ENCODE measurements at regions of chr3 and their contacts with region 1.

Region 1: GRCh38 chr3:160413613-160414248 is 14.3 kb downstream of the SMC4 start:
- DNase-seq: peak; percentile 84
- ATAC-seq: peak; percentile 91
- H3K4me3 ChIP-seq: no peak overlapping the region
- H3K27ac ChIP-seq: no peak overlapping the region
- H3K4me1 ChIP-seq: peaks cover 3% of the 10 kb centered on the region
- H3K27me3 ChIP-seq: no peaks in the 10 kb centered on the region
- CTCF ChIP-seq: peak; percentile 89
- POLR2A ChIP-seq: no peak
- RAD21 ChIP-seq: peak; percentile 84

Region 2: GRCh38 chr3:159929435-159930141 is 484.1 kb before region 1 on chr3:
- CTCF ChIA-PET with region 1: interaction called, 3 read pairs
- POLR2A ChIA-PET with region 1: no interaction called
- dilution Hi-C with region 1: no loop called
- in situ Hi-C with region 1: no loop called
- intact Hi-C with region 1: loop called (anchors 5 kb)
- DNase-seq: peak; percentile 87
- ATAC-seq: peak; percentile 41
- H3K4me3 ChIP-seq: no peak overlapping the region
- H3K27ac ChIP-seq: peak overlapping the region; percentile 93
- H3K4me1 ChIP-seq: peaks cover 24% of the 10 kb centered on the region
- H3K27me3 ChIP-seq: no peaks in the 10 kb centered on the region
- CTCF ChIP-seq: peak; percentile 67
- POLR2A ChIP-seq: no peak
- RAD21 ChIP-seq: peak; percentile 72

Region 3: GRCh38 chr3:160038862-160039562 is 374.7 kb before region 1 on chr3:
- CTCF ChIA-PET with region 1: interaction called, 4 read pairs
- POLR2A ChIA-PET with region 1: no interaction called
- dilution Hi-C with region 1: no loop called
- in situ Hi-C with region 1: loop called (anchors 10 kb)
- intact Hi-C with region 1: no loop called
- DNase-seq: no peak
- ATAC-seq: peak; percentile 49
- H3K4me3 ChIP-seq: peak overlapping the region; percentile 36
- H3K27ac ChIP-seq: no peak overlapping the region
- H3K4me1 ChIP-seq: peaks cover 4% of the 10 kb centered on the region; the same call in 1 of the 2 replicates
- H3K27me3 ChIP-seq: peaks cover 21% of the 10 kb centered on the region
- CTCF ChIP-seq: no peak
- POLR2A ChIP-seq: no peak
- RAD21 ChIP-seq: no peak

Region 4: GRCh38 chr3:160265073-160265472 is 148.7 kb before region 1 on chr3:
- CTCF ChIA-PET with region 1: no interaction called
- POLR2A ChIA-PET with region 1: no interaction called
- dilution Hi-C with region 1: no loop called
- in situ Hi-C with region 1: no loop called
- intact Hi-C with region 1: no loop called
- DNase-seq: no peak
- ATAC-seq: no peak
- H3K4me3 ChIP-seq: no peak overlapping the region
- H3K27ac ChIP-seq: no peak overlapping the region
- H3K4me1 ChIP-seq: no peaks in the 10 kb centered on the region
- H3K27me3 ChIP-seq: no peaks in the 10 kb centered on the region
- CTCF ChIP-seq: no peak
- POLR2A ChIP-seq: no peak
- RAD21 ChIP-seq: no peak

Region 5: DNA sequence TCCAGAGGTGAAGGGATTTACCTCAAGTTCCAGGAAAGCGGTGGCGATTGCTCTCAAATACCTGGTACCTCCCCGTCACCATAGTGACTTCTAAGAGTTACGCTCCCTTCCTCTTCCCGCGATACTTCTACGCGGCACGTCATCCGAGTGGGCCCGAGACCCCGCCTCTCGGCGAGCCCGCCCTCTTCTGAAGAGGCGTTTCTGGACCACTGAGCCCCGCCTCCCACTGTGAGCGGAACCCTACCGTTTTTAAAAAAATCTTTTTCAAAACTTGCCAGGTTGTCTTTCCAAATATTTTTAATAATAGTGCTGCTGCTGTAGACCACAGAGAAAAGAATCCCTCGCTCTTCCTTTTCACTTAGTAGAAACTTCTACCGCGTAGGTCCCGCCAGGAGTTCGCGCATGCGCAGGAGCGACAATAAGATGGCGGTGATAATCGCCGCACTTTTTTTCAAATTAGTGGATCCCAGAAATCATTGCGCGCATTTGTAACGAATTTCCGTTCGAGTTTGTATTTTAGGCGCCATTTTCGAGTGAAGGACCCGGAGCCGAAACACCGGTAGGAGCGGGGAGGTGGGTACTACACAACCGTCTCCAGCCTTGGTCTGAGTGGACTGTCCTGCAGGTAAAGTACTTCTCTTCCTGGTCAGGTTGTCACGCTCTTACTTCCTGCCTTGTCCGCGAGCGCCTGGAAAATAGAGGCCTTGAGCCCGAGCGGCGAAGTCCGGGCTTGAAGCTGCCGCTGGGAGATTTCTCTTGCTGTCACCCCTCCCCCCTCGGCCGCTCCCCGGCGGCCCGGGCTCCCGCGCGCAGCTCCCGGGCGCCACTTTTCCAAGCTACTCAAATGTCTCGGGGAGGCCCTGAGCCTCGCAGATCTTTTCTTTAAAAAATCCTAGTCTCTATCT is 14.4 kb before region 1 on chr3 and contains the starts of genes IFT80 and SMC4:
- CTCF ChIA-PET with region 1: no interaction called
- POLR2A ChIA-PET with region 1: interaction called, 4 read pairs
- dilution Hi-C with region 1: no loop called
- in situ Hi-C with region 1: no loop called
- intact Hi-C with region 1: loop called (anchors 1 kb)
- DNase-seq: peak; percentile 95
- ATAC-seq: peak; percentile 94
- H3K4me3 ChIP-seq: peak within 1 kb of the TSS; percentile 60
- H3K27ac ChIP-seq: peak within 1 kb of the TSS; percentile 88
- H3K4me1 ChIP-seq: peaks cover 3% of the 10 kb centered on the region; the same call in 1 of the 2 replicates
- H3K27me3 ChIP-seq: no peaks in the 10 kb centered on the region
- CTCF ChIP-seq: no peak
- POLR2A ChIP-seq: peak; percentile 90; the same call in 1 of the 2 replicates
- RAD21 ChIP-seq: no peak
- total RNA-seq, gene IFT80: 16.8 and 36.9 TPM in 2 replicates
- total RNA-seq, gene SMC4: 48.8 and 77.8 TPM in 2 replicates

Region 6: DNA sequence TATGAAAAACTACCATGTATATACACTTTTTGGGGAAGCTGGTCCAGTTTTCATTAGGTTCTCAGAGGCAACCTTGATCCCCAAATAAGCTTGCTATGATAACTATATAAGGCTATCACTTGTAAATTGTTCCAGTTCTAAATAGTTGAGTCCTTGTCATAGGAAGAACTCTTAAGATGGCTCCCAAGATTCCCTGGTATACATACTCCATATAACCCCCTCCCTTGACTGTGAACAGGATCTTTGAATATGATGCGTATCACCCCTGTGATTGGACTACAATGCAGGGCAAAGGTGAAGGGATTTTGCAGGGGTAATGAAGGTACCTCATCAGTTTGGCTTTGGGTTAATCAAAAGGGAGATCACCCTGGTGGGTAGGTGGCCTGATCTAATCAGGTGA is 84.5 kb after region 1 on chr3:
- CTCF ChIA-PET with region 1: no interaction called
- POLR2A ChIA-PET with region 1: no interaction called
- dilution Hi-C with region 1: no loop called
- in situ Hi-C with region 1: no loop called
- intact Hi-C with region 1: no loop called
- DNase-seq: no peak
- ATAC-seq: no peak
- H3K4me3 ChIP-seq: no peak overlapping the region
- H3K27ac ChIP-seq: no peak overlapping the region
- H3K4me1 ChIP-seq: no peaks in the 10 kb centered on the region
- H3K27me3 ChIP-seq: no peaks in the 10 kb centered on the region
- CTCF ChIP-seq: no peak
- POLR2A ChIP-seq: no peak
- RAD21 ChIP-seq: no peak

Region 7: GRCh38 chr3:160540551-160540950 is 126.8 kb after region 1 on chr3:
- CTCF ChIA-PET with region 1: no interaction called
- POLR2A ChIA-PET with region 1: no interaction called
- dilution Hi-C with region 1: no loop called
- in situ Hi-C with region 1: no loop called
- intact Hi-C with region 1: no loop called
- DNase-seq: peak; percentile 50
- ATAC-seq: peak; percentile 62
- H3K4me3 ChIP-seq: no peak overlapping the region
- H3K27ac ChIP-seq: no peak overlapping the region
- H3K4me1 ChIP-seq: 0 out of 2 replicates have a peak, but pooled peaks cover 2% of the 10 kb centered on the region
- H3K27me3 ChIP-seq: no peaks in the 10 kb centered on the region
- CTCF ChIP-seq: no peak
- POLR2A ChIP-seq: no peak
- RAD21 ChIP-seq: no peak

Region 8: GRCh38 chr3:160739079-160739478 is 325.3 kb after region 1 on chr3:
- CTCF ChIA-PET with region 1: no interaction called
- POLR2A ChIA-PET with region 1: no interaction called
- dilution Hi-C with region 1: no loop called
- in situ Hi-C with region 1: no loop called
- intact Hi-C with region 1: no loop called
- DNase-seq: no peak
- ATAC-seq: no peak
- H3K4me3 ChIP-seq: no peak overlapping the region
- H3K27ac ChIP-seq: no peak overlapping the region
- H3K4me1 ChIP-seq: no peaks in the 10 kb centered on the region
- H3K27me3 ChIP-seq: peaks cover 2% of the 10 kb centered on the region; the same call in 1 of the 2 replicates
- CTCF ChIP-seq: no peak
- POLR2A ChIP-seq: no peak
- RAD21 ChIP-seq: no peak

Measured in IMR-90 (cell line).